ENCODE measurements at regions of chr1 and their contacts with region 1.

Region 1: GRCh38 chr1:10779841-10780622 is 16.4 kb downstream of the CASZ1 start:
- DNase-seq: no peak
- H3K4me3 ChIP-seq: no peak overlapping the region
- H3K27ac ChIP-seq: peak overlapping the region; percentile 65
- H3K4me1 ChIP-seq: peaks cover 23% of the 10 kb centered on the region
- H3K27me3 ChIP-seq: no peaks in the 10 kb centered on the region
- CTCF ChIP-seq: no peak

Region 2: DNA sequence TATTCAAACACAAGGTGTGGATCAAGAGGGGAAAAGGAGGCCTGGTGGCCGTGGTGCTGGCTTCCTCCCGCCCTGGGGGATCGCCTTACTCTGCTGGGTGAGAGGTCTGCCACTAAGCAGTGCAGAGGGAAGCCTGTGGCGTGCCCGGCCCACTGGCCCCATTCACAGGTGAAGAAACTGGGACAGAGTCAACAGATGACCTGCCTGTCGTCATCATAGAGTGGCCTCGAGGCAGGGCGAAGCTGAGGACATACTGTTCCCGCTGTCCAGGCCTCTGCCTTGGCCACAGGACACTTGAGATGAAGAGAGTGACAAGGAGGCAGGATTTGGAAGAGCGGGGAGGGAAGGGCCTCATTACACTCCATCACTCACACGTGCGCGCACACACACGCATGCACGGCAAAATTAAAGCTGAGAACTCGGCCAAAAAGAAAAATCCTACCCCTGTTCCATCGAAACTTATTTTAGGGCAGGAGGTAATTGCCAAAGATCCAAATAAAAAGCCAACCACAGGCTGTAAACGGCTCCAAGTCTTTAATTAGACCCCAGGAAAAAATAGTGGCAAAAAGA is 34.1 kb before region 1 on chr1:
- CTCF ChIA-PET with region 1: no interaction called
- dilution Hi-C with region 1: loop called (anchors 5 kb)
- in situ Hi-C with region 1: no loop called
- intact Hi-C with region 1: no loop called
- DNase-seq: no peak
- H3K4me3 ChIP-seq: no peak overlapping the region
- H3K27ac ChIP-seq: no peak overlapping the region
- H3K4me1 ChIP-seq: no peaks in the 10 kb centered on the region
- H3K27me3 ChIP-seq: no peaks in the 10 kb centered on the region
- CTCF ChIP-seq: no peak

Region 3: DNA sequence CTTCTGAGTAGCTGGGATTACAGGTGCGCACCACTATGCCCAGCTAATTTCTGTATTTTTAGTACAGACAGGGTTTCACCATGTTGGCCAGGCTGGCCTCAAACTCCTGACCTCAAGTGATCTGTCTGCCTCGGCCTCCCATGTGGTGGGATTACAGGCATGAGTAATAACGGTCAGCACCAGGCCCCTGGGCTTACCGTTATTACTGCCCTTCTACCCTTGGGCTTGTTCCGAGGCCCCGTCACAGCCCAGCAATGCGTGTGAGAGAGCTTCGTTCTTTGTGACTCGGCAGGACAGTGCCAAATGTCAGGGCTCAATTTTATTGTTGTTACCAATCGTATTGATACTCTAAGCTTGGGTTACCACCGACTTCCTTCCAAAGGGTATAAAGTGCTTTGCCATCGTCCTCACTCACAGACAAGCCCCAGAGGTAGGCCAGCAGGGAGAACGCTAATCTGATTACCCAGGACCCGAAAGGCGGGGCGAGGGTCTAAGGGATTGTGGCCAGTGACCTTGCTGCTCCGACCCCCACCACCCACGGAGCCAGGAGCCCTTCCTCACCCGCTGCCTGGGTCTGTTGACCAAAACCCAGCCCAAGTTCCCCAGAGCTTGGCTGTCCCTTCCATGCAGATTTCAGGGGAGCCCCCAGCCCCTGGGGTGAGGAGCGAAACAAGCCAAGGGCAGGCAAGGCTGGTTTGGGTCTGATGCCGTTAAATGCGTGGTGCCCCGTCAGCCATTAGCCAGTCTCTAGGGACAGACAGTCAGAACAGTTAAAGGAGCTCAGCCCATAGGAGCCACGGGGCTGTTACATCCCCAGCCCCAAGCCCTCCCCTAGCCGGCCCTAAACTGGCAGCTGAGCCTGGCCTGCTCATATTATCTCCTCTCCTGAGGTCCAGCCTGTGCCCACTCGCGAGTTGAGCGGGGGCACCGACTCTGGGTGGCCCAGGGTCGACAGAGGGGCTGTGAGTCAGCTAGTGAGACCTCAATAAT is 71.3 kb after region 1 on chr1:
- CTCF ChIA-PET with region 1: no interaction called
- dilution Hi-C with region 1: loop called (anchors 5 kb)
- in situ Hi-C with region 1: no loop called
- intact Hi-C with region 1: no loop called
- DNase-seq: no peak
- H3K4me3 ChIP-seq: no peak overlapping the region
- H3K27ac ChIP-seq: no peak overlapping the region
- H3K4me1 ChIP-seq: no peaks in the 10 kb centered on the region
- H3K27me3 ChIP-seq: no peaks in the 10 kb centered on the region
- CTCF ChIP-seq: no peak

Measured in mammary epithelial cell (primary cell).